AG04449 (cell line): ENCODE measurements at regions of chr12 and their contacts with region 1.

Region 1: GRCh38 chr12:4421590-4422031 is 24.0 kb downstream of the FGF6 start:
- DNase-seq: no peak
- H3K4me3 ChIP-seq: no peak overlapping the region
- CTCF ChIP-seq: peak; percentile 51

Region 2: DNA sequence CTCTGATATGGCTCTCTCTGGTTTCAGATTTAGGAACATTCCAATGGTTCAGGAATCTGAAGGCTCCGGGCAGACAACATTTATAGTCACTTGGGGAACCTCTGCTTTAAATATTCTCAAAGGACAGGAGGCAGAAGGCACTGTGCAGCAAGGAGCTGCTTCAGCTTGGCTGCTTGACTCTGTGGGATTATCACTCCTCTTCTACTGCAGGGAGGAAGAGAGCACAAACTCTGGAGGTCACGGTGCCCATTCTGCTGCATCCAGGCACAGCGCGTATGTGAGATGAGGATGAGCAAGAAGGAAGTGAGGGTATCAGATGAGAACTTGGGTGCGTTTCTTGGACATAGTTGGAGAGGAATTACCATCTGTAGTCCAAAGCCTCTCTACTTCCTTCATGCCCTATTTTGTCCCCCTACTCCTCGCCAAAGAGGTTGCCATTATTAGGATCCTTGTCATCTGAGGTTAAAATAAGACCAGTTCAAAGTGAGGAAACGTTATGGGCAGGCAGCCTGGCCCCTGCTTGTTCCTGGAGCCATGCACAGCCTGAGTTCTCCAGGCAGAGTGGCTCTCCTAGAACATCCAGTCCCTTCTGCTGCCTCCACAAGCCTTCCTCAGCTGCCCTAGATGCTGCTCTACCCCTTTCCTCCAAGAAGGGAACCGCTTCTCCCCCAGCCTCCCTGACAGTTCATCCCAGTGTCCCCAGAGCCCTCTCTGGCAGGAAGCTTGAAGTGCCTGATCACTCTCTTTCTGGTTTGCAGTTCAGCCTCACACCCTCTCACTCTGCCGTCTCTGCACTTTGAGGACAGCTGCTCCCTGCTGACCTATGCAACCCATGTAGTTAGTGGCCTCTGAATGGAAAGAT is 11.5 kb after region 1 on chr12:
- CTCF ChIA-PET with region 1: interaction called, 26 read pairs
- POLR2A ChIA-PET with region 1: no interaction called
- DNase-seq: no peak
- H3K4me3 ChIP-seq: no peak overlapping the region
- CTCF ChIP-seq: no peak

Region 3: DNA sequence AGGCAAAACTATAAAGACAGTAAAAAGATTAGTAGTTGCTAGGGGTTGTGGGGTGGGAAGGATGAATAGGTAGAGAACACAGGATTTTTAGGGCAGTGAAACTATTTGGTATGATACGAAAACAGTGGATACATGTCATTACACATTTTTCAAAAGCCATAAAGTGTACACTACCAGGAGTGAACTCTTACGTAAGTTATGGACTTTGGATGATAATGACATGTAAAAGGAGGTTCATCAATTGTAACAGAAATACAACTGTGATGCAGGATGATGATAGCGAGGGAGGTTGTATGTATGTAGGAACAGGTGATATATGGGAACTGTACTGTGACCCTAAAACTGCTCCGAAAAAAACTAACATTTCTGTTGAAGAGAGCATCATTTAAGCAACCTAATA is 39.1 kb after region 1 on chr12:
- CTCF ChIA-PET with region 1: no interaction called
- POLR2A ChIA-PET with region 1: no interaction called
- DNase-seq: no peak
- H3K4me3 ChIP-seq: no peak overlapping the region
- CTCF ChIP-seq: no peak

Region 4: GRCh38 chr12:4526923-4527546 is 105.4 kb after region 1 on chr12:
- CTCF ChIA-PET with region 1: interaction called, 48 read pairs
- POLR2A ChIA-PET with region 1: no interaction called
- DNase-seq: no peak
- H3K4me3 ChIP-seq: no peak overlapping the region
- CTCF ChIP-seq: no peak

Region 5: GRCh38 chr12:4780641-4781625 is 359.3 kb after region 1 on chr12:
- CTCF ChIA-PET with region 1: no interaction called
- POLR2A ChIA-PET with region 1: no interaction called
- DNase-seq: no peak
- H3K4me3 ChIP-seq: no peak overlapping the region
- CTCF ChIP-seq: no peak